ENCODE measurements at regions of chr17 and their contacts with region 1.

Region 1: GRCh38 chr17:75319904-75320691 is 30.9 kb upstream of the SLC25A19 start:
- DNase-seq: peak; percentile 57
- ATAC-seq: peak; percentile 59
- H3K4me3 ChIP-seq: no peak overlapping the region
- H3K4me3 Mint-ChIP-seq: peak overlapping the region; percentile 77
- H3K27ac ChIP-seq: peak overlapping the region; percentile 71 to 81
- H3K27ac Mint-ChIP-seq: peak overlapping the region; percentile 92
- H3K4me1 ChIP-seq: peaks cover 39 to 73% of the 10 kb centered on the region in 2 donors
- H3K4me1 Mint-ChIP-seq: peaks cover 64% of the 10 kb centered on the region
- H3K27me3 ChIP-seq: no peaks in the 10 kb centered on the region
- H3K27me3 Mint-ChIP-seq: no peaks in the 10 kb centered on the region
- CTCF ChIP-seq: no peak

Region 2: DNA sequence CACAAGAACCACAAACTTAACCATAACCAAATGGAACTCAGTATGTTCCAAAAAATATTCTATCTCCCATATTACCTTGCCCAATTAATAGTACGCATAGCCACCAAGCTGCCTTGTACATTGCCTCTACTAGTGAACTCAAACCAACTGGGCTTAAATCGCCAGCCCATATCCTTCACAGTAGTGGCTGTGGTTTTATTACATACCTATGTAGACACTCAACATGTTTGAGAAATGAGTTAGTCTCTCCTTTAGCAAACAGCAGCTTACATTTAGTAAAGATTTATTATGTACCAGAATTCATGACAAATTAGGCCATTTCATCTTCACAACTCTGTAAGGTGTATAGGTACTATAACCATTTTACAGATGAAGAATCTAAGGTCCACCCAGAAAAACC is 44.0 kb after region 1 on chr17:
- CTCF ChIA-PET with region 1: interaction called, 20 read pairs
- POLR2A ChIA-PET with region 1: no interaction called
- intact Hi-C with region 1: no loop called
- DNase-seq: no peak
- ATAC-seq: no peak
- H3K4me3 ChIP-seq: no peak overlapping the region
- H3K4me3 Mint-ChIP-seq: peak overlapping the region; percentile 64
- H3K27ac ChIP-seq: peak overlapping the region; percentile 8 to 70
- H3K27ac Mint-ChIP-seq: peak overlapping the region; percentile 62
- H3K4me1 ChIP-seq: peaks cover 84 to 93% of the 10 kb centered on the region in 2 donors
- H3K4me1 Mint-ChIP-seq: peaks cover 92% of the 10 kb centered on the region
- H3K27me3 ChIP-seq: no peaks in the 10 kb centered on the region
- H3K27me3 Mint-ChIP-seq: no peaks in the 10 kb centered on the region
- CTCF ChIP-seq: no peak

Region 3: DNA sequence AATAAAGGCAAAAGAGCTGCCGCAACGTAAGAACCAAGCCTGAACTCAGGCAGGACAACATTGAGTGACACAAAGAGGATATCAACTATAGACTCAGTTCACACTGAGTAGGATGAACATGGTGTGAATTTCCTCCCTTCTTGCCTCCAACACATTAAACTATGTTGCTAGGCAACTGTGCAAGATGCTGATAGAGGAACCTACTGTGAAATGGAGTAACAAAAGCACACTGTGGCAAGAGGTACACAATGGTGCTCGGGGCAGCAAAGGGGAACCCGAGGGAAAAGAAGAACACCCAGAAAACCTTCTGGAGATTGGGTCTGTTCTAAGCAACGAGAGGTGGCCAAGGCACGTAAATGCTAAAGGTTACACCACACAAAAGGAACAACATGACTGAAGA is 51.2 kb after region 1 on chr17:
- CTCF ChIA-PET with region 1: interaction called, 20 read pairs
- POLR2A ChIA-PET with region 1: no interaction called
- intact Hi-C with region 1: no loop called
- DNase-seq: peak; percentile 73
- ATAC-seq: peak; percentile 62
- H3K4me3 ChIP-seq: peak overlapping the region in 1 of 5 experiments; percentile 3
- H3K4me3 Mint-ChIP-seq: peak overlapping the region; percentile 74
- H3K27ac ChIP-seq: peak overlapping the region; percentile 42 to 76
- H3K27ac Mint-ChIP-seq: peak overlapping the region; percentile 84
- H3K4me1 ChIP-seq: peaks cover 64 to 85% of the 10 kb centered on the region in 2 donors
- H3K4me1 Mint-ChIP-seq: peaks cover 80% of the 10 kb centered on the region
- H3K27me3 ChIP-seq: no peaks in the 10 kb centered on the region
- H3K27me3 Mint-ChIP-seq: no peaks in the 10 kb centered on the region
- CTCF ChIP-seq: no peak

Region 4: DNA sequence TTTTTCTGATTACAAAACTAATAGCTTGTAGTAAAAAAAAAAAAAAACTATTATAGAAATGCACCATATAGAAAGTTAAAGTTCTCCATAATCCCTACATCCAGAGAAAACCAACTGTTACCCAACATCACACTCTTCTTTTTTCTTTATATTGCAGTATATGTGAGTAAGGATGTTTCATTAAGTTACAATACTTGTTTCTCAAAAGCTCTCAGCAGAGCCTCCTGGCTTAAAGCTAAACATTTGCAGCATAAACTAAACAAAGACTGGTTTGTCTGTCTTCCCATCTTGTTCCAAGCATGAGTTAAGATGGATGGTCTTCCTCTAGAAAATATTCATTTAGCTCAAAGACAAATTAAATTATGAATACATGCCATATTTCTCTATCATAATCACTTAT is 60.2 kb after region 1 on chr17:
- CTCF ChIA-PET with region 1: interaction called, 39 read pairs
- POLR2A ChIA-PET with region 1: no interaction called
- intact Hi-C with region 1: no loop called
- DNase-seq: no peak
- ATAC-seq: no peak
- H3K4me3 ChIP-seq: no peak overlapping the region
- H3K4me3 Mint-ChIP-seq: no peak overlapping the region
- H3K27ac ChIP-seq: peak overlapping the region in 1 of 2 donors; percentile 68
- H3K27ac Mint-ChIP-seq: no peak overlapping the region
- H3K4me1 ChIP-seq: peaks cover 54 to 56% of the 10 kb centered on the region in 2 donors
- H3K4me1 Mint-ChIP-seq: peaks cover 65% of the 10 kb centered on the region
- H3K27me3 ChIP-seq: no peaks in the 10 kb centered on the region
- H3K27me3 Mint-ChIP-seq: no peaks in the 10 kb centered on the region
- CTCF ChIP-seq: no peak

Region 5: DNA sequence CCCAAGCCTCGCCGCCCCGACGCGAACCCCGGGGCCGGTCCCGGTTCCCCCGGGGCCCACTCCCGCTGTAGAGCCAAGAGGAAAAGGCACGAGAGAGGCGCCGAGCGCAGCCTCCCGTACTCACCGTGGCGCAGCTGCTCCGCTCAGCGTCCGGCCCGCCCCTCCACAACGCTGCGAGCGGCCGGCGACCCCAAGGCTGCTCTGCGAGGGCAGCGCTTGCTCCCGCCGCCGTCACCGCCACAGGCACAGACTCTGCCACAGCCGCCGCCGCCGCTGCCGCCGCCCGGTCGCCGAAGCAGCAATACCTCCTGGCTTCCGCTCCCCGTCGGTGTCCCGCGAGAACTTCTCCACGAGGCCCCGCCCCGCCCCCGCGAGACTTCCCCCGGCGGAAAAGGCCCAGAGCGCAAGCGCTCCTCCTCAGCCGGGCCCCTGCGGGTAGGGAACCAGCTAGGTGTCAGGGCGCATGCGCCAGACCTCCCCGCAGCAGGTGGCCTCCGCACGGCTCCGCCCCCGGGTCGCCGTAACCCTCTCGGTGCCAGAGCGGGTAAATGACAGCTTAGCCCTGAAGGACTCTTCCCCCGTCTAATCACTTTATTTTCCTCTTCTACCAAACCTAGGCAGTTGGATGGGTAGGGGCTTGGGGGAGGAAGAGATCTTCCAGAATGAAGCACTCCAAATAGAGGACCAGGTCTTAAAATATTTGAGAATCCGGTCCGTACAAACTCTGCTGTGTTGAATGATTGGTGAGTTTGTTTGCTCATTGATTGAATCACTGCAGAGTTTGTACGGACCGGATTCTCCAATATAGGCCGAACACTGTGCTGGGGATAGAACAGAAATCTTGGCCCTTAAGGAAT is 85.5 kb after region 1 on chr17 and contains the start of gene GRB2:
- CTCF ChIA-PET with region 1: interaction called, 116 read pairs
- POLR2A ChIA-PET with region 1: interaction called, 18 read pairs
- intact Hi-C with region 1: loop called (anchors 1 kb)
- DNase-seq: peak; percentile 98
- ATAC-seq: peak; percentile 89
- H3K4me3 ChIP-seq: peak within 1 kb of the TSS; percentile 91 to 99 (median 99)
- H3K4me3 Mint-ChIP-seq: peak within 1 kb of the TSS; percentile 98
- H3K27ac ChIP-seq: peak within 1 kb of the TSS; percentile 79 to 92
- H3K27ac Mint-ChIP-seq: peak within 1 kb of the TSS; percentile 97
- H3K4me1 ChIP-seq: peaks cover 32 to 43% of the 10 kb centered on the region in 2 donors
- H3K4me1 Mint-ChIP-seq: peaks cover 39% of the 10 kb centered on the region
- H3K27me3 ChIP-seq: no peaks in the 10 kb centered on the region
- H3K27me3 Mint-ChIP-seq: no peaks in the 10 kb centered on the region
- CTCF ChIP-seq: no peak
- total RNA-seq, gene GRB2: 219 and 224 TPM in 2 replicates

Region 6: GRCh38 chr17:75412455-75413317 is 92.6 kb after region 1 on chr17:
- CTCF ChIA-PET with region 1: interaction called, 116 read pairs
- POLR2A ChIA-PET with region 1: interaction called, 5 read pairs
- intact Hi-C with region 1: loop called (anchors 1 kb)
- DNase-seq: peak; percentile 90
- ATAC-seq: peak; percentile 94
- H3K4me3 ChIP-seq: peak overlapping the region in 4 of 5 experiments; percentile 9 to 30 (median 23)
- H3K4me3 Mint-ChIP-seq: peak overlapping the region; percentile 68
- H3K27ac ChIP-seq: no peak overlapping the region
- H3K27ac Mint-ChIP-seq: peak overlapping the region; percentile 62
- H3K4me1 ChIP-seq: peaks cover 7 to 14% of the 10 kb centered on the region in 2 donors
- H3K4me1 Mint-ChIP-seq: peaks cover 13% of the 10 kb centered on the region
- H3K27me3 ChIP-seq: no peaks in the 10 kb centered on the region
- H3K27me3 Mint-ChIP-seq: no peaks in the 10 kb centered on the region
- CTCF ChIP-seq: peak; percentile 79

Region 7: DNA sequence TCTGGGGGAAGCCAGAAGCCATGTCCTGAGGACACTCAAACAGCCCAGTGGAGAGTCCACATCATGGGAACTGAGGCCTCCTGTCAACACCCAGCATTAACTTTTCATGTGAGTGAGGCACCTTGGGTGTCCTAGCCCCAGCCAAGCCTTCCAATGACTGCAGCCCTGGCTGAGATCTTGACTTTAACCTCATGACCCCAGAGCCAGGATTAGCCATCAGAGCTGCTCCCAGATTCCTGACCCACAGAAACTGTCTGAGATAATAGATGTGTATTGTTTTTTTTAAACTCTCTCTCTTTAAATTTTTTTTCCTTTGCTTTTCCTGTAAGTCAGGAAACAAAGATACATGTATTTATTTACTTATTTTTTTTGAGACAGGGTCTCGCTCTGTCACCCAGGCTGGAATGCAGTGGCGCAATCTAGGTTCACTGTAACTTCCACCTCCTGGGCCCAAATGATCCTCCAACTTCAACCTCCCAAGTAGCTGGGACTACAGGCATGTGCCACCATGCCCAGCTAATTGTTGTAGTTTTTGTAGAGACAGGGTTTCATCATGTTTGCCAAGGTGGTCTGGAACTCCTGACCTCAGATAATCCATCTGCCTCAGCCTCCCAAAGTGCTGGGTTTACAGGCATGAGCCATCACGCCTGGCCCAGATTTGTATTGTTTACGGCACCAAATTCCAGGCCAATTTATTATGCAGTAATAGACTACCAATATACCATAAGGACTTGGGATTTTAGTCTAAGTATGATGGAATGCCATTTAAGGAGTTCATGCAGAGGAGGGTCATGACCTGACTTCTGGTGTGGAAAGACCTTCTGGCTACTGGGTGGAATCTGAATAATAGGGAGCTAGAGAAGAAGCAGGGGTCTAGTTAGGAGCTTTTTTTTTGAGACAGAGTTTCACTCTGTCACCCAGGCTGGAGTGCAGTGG is 122.3 kb after region 1 on chr17:
- CTCF ChIA-PET with region 1: no interaction called
- POLR2A ChIA-PET with region 1: no interaction called
- intact Hi-C with region 1: no loop called
- DNase-seq: no peak
- ATAC-seq: no peak
- H3K4me3 ChIP-seq: no peak overlapping the region
- H3K4me3 Mint-ChIP-seq: no peak overlapping the region
- H3K27ac ChIP-seq: no peak overlapping the region
- H3K27ac Mint-ChIP-seq: no peak overlapping the region
- H3K4me1 ChIP-seq: no peaks in the 10 kb centered on the region
- H3K4me1 Mint-ChIP-seq: no peaks in the 10 kb centered on the region
- H3K27me3 ChIP-seq: no peaks in the 10 kb centered on the region
- H3K27me3 Mint-ChIP-seq: no peaks in the 10 kb centered on the region
- CTCF ChIP-seq: no peak

Measured in B cell (primary cell).